ENCODE measurements at regions of chr19 and their contacts with region 1.

Region 1: GRCh38 chr19:41641879-41642485 is 15.1 kb upstream of the CEACAM4 start:
- DNase-seq: peak; percentile 74
- ATAC-seq: peak; percentile 73
- H3K4me3 Mint-ChIP-seq: no peak overlapping the region
- H3K27ac Mint-ChIP-seq: no peak overlapping the region
- H3K4me1 Mint-ChIP-seq: no peaks in the 10 kb centered on the region
- H3K27me3 Mint-ChIP-seq: peaks cover 22% of the 10 kb centered on the region

Region 2: DNA sequence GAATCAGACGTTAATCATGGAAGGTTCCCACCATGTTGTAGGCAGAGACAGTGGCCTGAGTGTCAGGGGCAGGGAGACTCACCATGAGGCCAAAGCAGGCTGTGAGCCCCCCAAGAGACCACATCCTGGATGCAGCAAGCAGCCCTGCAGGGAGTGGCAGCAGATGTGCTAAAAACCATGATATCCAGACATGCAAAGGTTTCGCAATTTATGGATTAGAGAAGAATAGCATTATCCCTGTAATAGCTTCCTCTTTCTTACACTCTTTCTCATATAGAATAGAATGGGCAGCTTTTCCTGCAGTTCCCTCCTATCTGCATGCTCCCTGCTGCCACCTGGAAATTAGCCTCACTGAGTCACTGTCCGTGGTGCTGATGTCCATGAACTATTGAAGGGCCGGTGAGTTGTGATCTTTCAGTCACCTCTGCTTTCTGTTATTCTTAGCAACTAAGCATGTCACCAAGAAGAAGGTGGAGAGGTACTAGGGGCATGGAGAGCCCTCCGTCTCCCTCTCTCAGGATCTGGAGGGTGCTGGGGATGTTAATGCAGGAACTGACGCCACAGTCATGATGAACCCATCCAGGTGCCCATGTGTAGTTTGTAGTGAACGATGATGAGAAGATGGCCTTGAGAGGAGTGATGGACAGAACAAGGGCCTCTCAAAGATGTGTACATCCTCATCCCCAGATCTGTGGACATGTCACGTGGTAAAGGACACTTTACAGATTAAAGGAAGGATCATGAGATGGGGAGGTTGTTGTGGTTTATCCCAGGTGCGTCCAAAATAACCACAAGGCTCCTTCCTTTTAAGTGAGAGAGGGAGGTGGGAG is 25.0 kb before region 1 on chr19:
- CTCF ChIA-PET with region 1: no interaction called
- DNase-seq: peak; percentile 39
- ATAC-seq: no peak
- H3K4me3 Mint-ChIP-seq: no peak overlapping the region
- H3K27ac Mint-ChIP-seq: no peak overlapping the region
- H3K4me1 Mint-ChIP-seq: no peaks in the 10 kb centered on the region
- H3K27me3 Mint-ChIP-seq: peaks cover 2% of the 10 kb centered on the region

Region 3: GRCh38 chr19:41657157-41657556 is 15.2 kb after region 1 on chr19:
- CTCF ChIA-PET with region 1: interaction called, 32 read pairs
- DNase-seq: no peak
- ATAC-seq: no peak
- H3K4me3 Mint-ChIP-seq: no peak overlapping the region
- H3K27ac Mint-ChIP-seq: no peak overlapping the region
- H3K4me1 Mint-ChIP-seq: peaks cover 4% of the 10 kb centered on the region
- H3K27me3 Mint-ChIP-seq: peaks cover 79% of the 10 kb centered on the region

Region 4: GRCh38 chr19:41691268-41691970 is 49.4 kb after region 1 on chr19:
- CTCF ChIA-PET with region 1: interaction called, 50 read pairs
- DNase-seq: no peak
- ATAC-seq: no peak
- H3K4me3 Mint-ChIP-seq: no peak overlapping the region
- H3K27ac Mint-ChIP-seq: no peak overlapping the region
- H3K4me1 Mint-ChIP-seq: no peaks in the 10 kb centered on the region
- H3K27me3 Mint-ChIP-seq: peaks cover 29% of the 10 kb centered on the region

Region 5: DNA sequence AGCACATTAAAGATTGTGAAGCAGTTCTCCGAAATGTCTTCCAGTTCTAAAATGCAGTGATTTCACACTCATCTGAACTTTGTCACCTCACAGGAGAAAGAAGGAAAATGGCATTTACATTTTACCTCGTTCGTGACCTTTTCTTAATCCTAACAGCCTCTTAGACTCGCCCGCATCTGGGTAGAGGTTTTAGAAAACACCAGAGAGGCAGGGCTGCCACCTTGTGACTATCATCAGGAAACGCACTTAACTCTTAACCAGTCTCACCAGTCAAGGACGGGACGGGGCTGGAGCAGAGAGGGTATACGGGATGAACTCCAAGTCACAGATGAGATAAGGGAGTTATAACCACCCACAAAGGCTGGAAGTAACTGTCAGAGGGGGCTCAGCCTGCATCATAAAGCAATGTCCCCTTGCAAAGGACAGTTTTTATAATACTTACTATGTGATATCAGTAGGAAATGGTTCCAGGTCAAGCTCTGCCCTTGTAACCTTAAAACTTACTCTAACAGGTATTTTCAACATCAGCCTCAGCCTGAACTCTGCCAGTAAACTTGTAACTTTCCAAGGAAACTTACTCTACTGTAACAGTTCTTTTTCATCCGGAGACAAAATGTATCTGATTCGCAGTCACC is 104.7 kb after region 1 on chr19:
- CTCF ChIA-PET with region 1: interaction called, 17 read pairs
- DNase-seq: peak; percentile 60
- ATAC-seq: peak; percentile 66
- H3K4me3 Mint-ChIP-seq: no peak overlapping the region
- H3K27ac Mint-ChIP-seq: no peak overlapping the region
- H3K4me1 Mint-ChIP-seq: peaks cover 7% of the 10 kb centered on the region
- H3K27me3 Mint-ChIP-seq: peaks cover 54% of the 10 kb centered on the region

Measured in activated CD8-positive, alpha-beta memory T cell treated with anti-CD3 and anti-CD28 coated beads, Interleukin-2, amount 10 ng/mL, durations not matched to agents 7 days and 5 days (primary cell).